WTC11 (cell line): ENCODE measurements at regions of chr3 and their contacts with region 1.

Region 1: GRCh38 chr3:151156618-151157216 is 46.3 kb downstream of the GPR171 start:
- DNase-seq: peak; percentile 25
- ATAC-seq: peak; percentile 91
- H3K4me3 Mint-ChIP-seq: no peak overlapping the region
- H3K27ac Mint-ChIP-seq: no peak overlapping the region
- H3K4me1 Mint-ChIP-seq: peaks cover 15% of the 10 kb centered on the region
- H3K27me3 Mint-ChIP-seq: no peaks in the 10 kb centered on the region
- CTCF ChIP-seq: peak; percentile 16; the same call in 1 of the 2 replicates

Region 2: GRCh38 chr3:151168269-151169094 is 11.8 kb after region 1 on chr3:
- CTCF ChIA-PET with region 1: interaction called, 14 read pairs
- POLR2A ChIA-PET with region 1: no interaction called
- DNase-seq: peak; percentile 81
- ATAC-seq: peak; percentile 94
- H3K4me3 Mint-ChIP-seq: no peak overlapping the region
- H3K27ac Mint-ChIP-seq: no peak overlapping the region
- H3K4me1 Mint-ChIP-seq: peaks cover 21% of the 10 kb centered on the region
- H3K27me3 Mint-ChIP-seq: no peaks in the 10 kb centered on the region
- CTCF ChIP-seq: peak; percentile 37

Region 3: GRCh38 chr3:151327571-151328198 is 171.0 kb after region 1 on chr3:
- CTCF ChIA-PET with region 1: no interaction called
- POLR2A ChIA-PET with region 1: no interaction called
- DNase-seq: no peak
- ATAC-seq: peak; percentile 34
- H3K4me3 Mint-ChIP-seq: no peak overlapping the region
- H3K27ac Mint-ChIP-seq: no peak overlapping the region
- H3K4me1 Mint-ChIP-seq: peaks cover 7% of the 10 kb centered on the region
- H3K27me3 Mint-ChIP-seq: no peaks in the 10 kb centered on the region
- CTCF ChIP-seq: peak; percentile 41; the same call in 1 of the 2 replicates